ENCODE measurements at regions of chr7 and their contacts with region 1.

Region 1: DNA sequence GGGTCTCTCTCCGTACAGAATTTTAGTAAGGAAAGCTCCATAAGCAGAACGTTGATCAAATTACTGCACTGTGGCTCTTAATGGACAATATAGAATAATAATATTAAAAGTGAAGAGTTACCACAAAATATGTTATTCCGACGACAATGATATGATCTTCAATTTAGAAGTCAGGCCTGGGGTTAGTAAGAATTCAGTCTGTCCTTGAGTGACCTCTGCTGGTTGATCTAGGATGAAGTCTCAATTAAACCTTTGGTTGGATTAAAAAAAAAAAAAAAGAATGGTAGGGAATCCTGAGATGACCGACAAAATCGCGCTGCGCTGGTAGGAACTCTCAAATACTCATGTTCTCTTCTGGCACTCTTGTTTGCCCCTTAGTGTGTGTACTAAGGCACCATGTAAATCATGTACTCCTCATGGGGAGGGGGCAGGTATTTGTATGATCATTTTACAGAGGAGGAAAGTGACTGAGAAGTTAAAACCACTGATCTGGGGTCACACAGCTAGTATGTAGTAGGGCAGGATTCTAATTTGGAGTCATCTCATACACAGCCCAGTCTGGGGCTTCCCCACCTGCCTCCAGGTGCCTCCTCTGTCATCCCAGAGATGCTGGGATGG is 161.3 kb upstream of the NPVF start:
- DNase-seq: peak in 2 of 9 experiments; percentile 34 to 57
- ATAC-seq: no peak
- H3K4me3 ChIP-seq: no peak overlapping the region
- H3K4me3 Mint-ChIP-seq: no peak overlapping the region
- H3K27ac ChIP-seq: no peak overlapping the region
- H3K27ac Mint-ChIP-seq: no peak overlapping the region
- H3K4me1 ChIP-seq: no peaks in the 10 kb centered on the region
- H3K4me1 Mint-ChIP-seq: no peaks in the 10 kb centered on the region
- H3K27me3 ChIP-seq: no peaks in the 10 kb centered on the region
- H3K27me3 Mint-ChIP-seq: peaks cover 4% of the 10 kb centered on the region
- CTCF ChIP-seq: no peak

Region 2: DNA sequence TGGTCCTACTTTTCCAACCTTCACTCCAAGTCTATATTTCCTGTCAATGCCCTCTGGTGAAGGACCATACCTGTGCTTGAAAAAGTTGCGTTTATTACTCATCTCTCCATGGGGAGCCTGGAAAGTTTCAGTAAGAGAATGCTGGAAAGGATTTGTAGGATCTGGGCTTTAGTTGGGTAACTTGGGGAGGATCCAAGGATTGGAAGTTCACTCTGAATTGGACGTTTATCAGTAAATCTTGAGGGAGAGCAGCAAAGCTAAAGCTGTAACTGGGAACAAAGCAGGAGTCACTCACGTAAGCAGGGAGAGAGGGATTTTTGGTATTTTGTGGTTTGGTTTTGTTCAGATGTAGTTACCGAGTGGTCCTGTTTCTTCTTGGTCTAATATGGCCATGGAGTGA is 109.9 kb before region 1 on chr7:
- CTCF ChIA-PET with region 1: no interaction called
- POLR2A ChIA-PET with region 1: no interaction called
- intact Hi-C with region 1: loop called in 1 of 2 experiments (anchors 5 kb)
- DNase-seq: no peak
- ATAC-seq: no peak
- H3K4me3 ChIP-seq: no peak overlapping the region
- H3K4me3 Mint-ChIP-seq: no peak overlapping the region
- H3K27ac ChIP-seq: no peak overlapping the region
- H3K27ac Mint-ChIP-seq: no peak overlapping the region
- H3K4me1 ChIP-seq: no peaks in the 10 kb centered on the region
- H3K4me1 Mint-ChIP-seq: no peaks in the 10 kb centered on the region
- H3K27me3 ChIP-seq: no peaks in the 10 kb centered on the region
- H3K27me3 Mint-ChIP-seq: peaks cover 12% of the 10 kb centered on the region
- CTCF ChIP-seq: no peak